ENCODE measurements at regions of chr22 and their contacts with region 1.

Region 1: GRCh38 chr22:19607192-19608002 is 83.2 kb upstream of the CLDN5 start:
- DNase-seq: peak in 1 of 4 experiments; percentile 45
- ATAC-seq: peak; percentile 2; the same call in 1 of the 3 replicates
- H3K4me3 ChIP-seq: no peak overlapping the region
- H3K27ac ChIP-seq: no peak overlapping the region
- H3K4me1 ChIP-seq: peaks cover 9 to 22% of the 10 kb centered on the region in 2 experiments; a peak in 4 of 5 replicates
- H3K27me3 ChIP-seq: peaks cover 90 to 92% of the 10 kb centered on the region in 2 experiments
- CTCF ChIP-seq: no peak
- EP300 ChIP-seq: no peak
- POLR2A ChIP-seq: no peak
- RAD21 ChIP-seq: no peak

Region 2: DNA sequence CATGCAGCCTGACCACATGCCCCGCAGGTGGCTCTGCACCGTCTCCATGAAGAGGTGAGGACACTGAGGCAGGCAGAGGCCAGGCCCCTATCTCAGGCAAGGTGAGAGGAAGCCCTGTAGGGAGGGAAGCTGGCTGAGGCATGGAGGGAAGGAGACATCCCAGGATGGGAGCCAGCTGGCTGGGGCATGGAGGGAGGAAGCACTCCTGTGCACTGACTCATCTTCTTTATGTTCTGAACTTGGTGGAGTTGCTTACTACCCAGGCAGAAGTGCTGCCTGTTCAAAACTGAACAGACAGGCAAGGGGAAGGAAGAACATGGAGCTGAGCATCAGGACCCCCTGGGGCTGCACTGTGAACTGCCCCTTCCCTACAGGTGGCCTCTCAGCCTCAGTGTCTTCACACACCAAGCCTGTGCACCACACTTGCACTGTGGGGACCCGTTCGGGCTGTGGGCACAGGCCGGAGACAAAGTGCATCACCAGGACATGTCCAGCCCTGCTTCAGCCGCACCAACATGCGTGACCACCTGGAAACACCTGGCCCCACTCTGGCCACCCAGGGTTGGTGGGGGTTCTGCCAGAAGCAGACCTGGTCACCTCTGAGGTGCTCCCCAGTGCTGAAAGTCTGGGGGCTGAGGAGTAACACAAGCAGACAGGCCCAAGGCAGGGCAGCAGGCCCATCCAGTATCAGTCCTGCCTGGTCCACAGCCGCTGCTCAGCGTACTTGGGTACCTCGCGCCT is 540.7 kb before region 1 on chr22:
- CTCF ChIA-PET with region 1: no interaction called
- POLR2A ChIA-PET with region 1: interaction called, 4 read pairs
- in situ Hi-C with region 1: no loop called
- intact Hi-C with region 1: loop called (anchors 10 kb)
- DNase-seq: no peak
- ATAC-seq: no peak; the same call in 2 of the 3 replicates
- H3K4me3 ChIP-seq: no peak overlapping the region
- H3K27ac ChIP-seq: no peak overlapping the region
- H3K4me1 ChIP-seq: peaks cover 0 to 19% of the 10 kb centered on the region in 2 experiments; a peak in 1 of 5 replicates
- H3K27me3 ChIP-seq: no peaks in the 10 kb centered on the region
- CTCF ChIP-seq: no peak
- EP300 ChIP-seq: no peak
- POLR2A ChIP-seq: no peak
- RAD21 ChIP-seq: no peak

Region 3: GRCh38 chr22:19530751-19531150 is 76.6 kb before region 1 on chr22:
- CTCF ChIA-PET with region 1: no interaction called
- POLR2A ChIA-PET with region 1: no interaction called
- in situ Hi-C with region 1: no loop called
- intact Hi-C with region 1: loop called (anchors 5 kb)
- DNase-seq: peak in 2 of 4 experiments; percentile 30 to 32
- ATAC-seq: peak; percentile 11; the same call in 2 of the 3 replicates
- H3K4me3 ChIP-seq: no peak overlapping the region
- H3K27ac ChIP-seq: no peak overlapping the region
- H3K4me1 ChIP-seq: peaks cover 0 to 10% of the 10 kb centered on the region in 2 experiments; a peak in 3 of 5 replicates
- H3K27me3 ChIP-seq: peaks cover 61 to 74% of the 10 kb centered on the region in 2 experiments
- CTCF ChIP-seq: no peak
- EP300 ChIP-seq: no peak
- POLR2A ChIP-seq: no peak
- RAD21 ChIP-seq: no peak

Region 4: DNA sequence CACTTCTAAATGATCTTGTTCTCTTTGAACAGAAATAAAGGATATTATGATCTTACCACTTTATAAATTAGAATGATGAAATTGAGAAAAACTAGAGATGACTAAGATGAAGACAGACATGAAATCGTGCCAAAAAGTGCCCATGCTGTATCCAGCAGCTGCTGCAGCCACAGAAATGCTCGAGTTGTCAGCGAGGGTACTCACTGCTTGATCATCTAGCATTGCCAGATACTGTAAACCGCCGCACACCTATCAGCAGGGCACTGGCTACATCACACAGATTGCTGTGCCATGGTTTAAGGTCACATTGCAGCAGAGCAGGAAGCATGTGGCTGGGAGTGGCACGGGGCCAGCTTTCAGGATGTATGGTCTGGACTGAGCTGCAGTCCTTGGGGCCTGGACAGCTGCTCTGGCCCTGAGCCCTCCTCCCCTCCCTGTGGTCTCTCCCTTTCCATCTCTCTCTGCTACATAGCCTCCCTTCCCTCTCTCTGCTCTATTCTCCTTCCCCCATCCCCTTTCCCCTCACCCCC is 56.0 kb after region 1 on chr22:
- CTCF ChIA-PET with region 1: no interaction called
- POLR2A ChIA-PET with region 1: no interaction called
- in situ Hi-C with region 1: no loop called
- intact Hi-C with region 1: loop called (anchors 10 kb)
- DNase-seq: peak in 1 of 4 experiments; percentile 29
- ATAC-seq: peak; percentile 24
- H3K4me3 ChIP-seq: no peak overlapping the region
- H3K27ac ChIP-seq: no peak overlapping the region
- H3K4me1 ChIP-seq: peaks cover 15 to 23% of the 10 kb centered on the region in 2 experiments
- H3K27me3 ChIP-seq: peaks cover 55 to 58% of the 10 kb centered on the region in 2 experiments
- CTCF ChIP-seq: no peak
- EP300 ChIP-seq: no peak
- POLR2A ChIP-seq: no peak
- RAD21 ChIP-seq: no peak